ENCODE measurements at regions of chr1 and their contacts with region 1.

Region 1: DNA sequence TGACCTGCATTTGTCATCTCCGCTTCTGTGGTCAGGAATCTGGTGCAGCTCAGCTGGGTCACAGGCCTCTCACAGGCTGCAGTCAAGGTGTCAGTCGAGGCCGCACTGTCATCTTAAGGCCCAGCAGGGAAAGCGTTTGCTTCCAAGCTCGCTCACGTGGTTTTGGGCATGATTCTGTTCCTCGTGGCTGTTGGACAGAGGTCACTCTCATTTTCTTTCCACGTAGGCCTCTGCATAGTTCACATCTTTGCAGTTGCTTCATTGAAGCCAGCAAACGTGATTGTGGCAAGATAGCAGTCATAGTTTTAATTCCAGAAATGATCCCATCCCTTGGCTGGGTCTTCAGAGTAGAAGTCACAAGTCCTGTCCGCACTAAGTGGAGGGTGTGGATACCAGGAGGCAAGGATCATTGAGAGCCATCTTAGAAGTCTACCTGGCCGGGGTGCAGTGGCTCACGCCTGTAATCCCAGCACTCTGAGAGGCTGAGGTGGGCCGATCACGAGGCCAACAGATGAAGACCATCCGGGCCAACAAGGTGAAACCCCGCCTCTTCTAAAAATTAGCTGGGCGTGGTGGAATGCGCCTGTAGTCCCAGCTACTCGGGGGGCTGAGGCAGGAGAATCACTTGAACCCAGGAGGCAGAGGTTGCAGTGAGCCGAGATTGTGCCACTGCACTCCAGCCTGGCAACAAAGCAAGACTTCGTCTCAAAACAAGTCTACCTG is 24.5 kb downstream of the NECAP2 start:
- DNase-seq: no peak
- CTCF ChIP-seq: no peak

Region 2: GRCh38 chr1:16175610-16176553 is 289.2 kb before region 1 on chr1:
- in situ Hi-C with region 1: no loop called
- DNase-seq: no peak
- CTCF ChIP-seq: no peak

Region 3: DNA sequence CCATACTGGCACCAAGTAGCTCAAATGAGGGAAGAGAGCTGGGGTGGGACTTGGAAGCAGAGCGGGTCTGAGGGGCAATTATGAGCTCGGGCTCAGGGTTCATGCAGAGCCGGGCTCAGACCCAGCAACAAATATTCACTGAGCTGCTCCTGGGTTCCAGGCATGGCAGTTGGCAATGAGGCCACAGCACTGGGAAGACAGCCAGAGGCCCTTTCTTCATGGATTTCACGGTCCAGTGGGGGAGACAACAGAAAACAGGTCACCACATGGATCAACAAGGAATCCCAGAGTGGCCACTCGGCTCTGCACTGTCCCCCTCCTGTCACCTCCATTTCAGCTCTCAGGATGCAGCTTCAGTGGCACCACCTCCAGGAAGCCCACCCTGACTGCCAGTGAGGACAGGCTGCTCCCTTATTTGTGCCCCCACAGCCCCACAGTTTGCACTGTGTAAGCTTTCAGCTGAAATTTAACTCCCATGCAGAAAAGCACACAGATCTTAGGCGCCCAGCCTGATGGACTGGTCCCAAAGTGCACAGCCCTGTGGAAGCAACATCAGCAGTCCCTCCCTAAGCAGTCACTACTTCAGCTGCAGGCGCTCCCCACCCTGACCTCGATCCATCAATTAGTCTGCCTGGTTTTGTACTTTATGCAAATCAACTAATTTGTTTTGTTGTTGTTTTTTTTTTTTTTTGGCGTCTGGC is 275.0 kb before region 1 on chr1:
- in situ Hi-C with region 1: no loop called
- DNase-seq: no peak
- CTCF ChIP-seq: no peak

Region 4: GRCh38 chr1:16607433-16607851 is 142.4 kb after region 1 on chr1:
- in situ Hi-C with region 1: loop called (anchors 10 kb)
- DNase-seq: no peak
- CTCF ChIP-seq: no peak

Region 5: GRCh38 chr1:16644193-16644481 is 179.1 kb after region 1 on chr1:
- in situ Hi-C with region 1: no loop called
- DNase-seq: no peak
- CTCF ChIP-seq: no peak